Endothelial cell of umbilical vein (primary cell): ENCODE measurements at regions of chr20 and their contacts with region 1.

Region 1: GRCh38 chr20:4813863-4814695 is 92.4 kb downstream of the PRND start:
- DNase-seq: peak; percentile 58
- H3K4me3 ChIP-seq: no peak overlapping the region
- H3K27ac ChIP-seq: peak overlapping the region; percentile 21
- H3K4me1 ChIP-seq: peaks cover 28% of the 10 kb centered on the region
- H3K27me3 ChIP-seq: no peaks in the 10 kb centered on the region
- CTCF ChIP-seq: no peak
- POLR2A ChIP-seq: no peak

Region 2: GRCh38 chr20:4730780-4731179 is 83.3 kb before region 1 on chr20:
- CTCF ChIA-PET with region 1: no interaction called
- POLR2A ChIA-PET with region 1: no interaction called
- dilution Hi-C with region 1: no loop called
- intact Hi-C with region 1: no loop called
- DNase-seq: peak; percentile 63
- H3K4me3 ChIP-seq: no peak overlapping the region
- H3K27ac ChIP-seq: no peak overlapping the region
- H3K4me1 ChIP-seq: peaks cover 8% of the 10 kb centered on the region
- H3K27me3 ChIP-seq: peaks cover 16% of the 10 kb centered on the region in 2 experiments
- CTCF ChIP-seq: no peak
- POLR2A ChIP-seq: no peak

Region 3: GRCh38 chr20:4949833-4950178 is 135.7 kb after region 1 on chr20:
- CTCF ChIA-PET with region 1: interaction called, 3 read pairs
- POLR2A ChIA-PET with region 1: interaction called, 3 read pairs
- dilution Hi-C with region 1: no loop called
- intact Hi-C with region 1: loop called (anchors 2 kb)
- DNase-seq: peak; percentile 46
- H3K4me3 ChIP-seq: no peak overlapping the region
- H3K27ac ChIP-seq: no peak overlapping the region
- H3K4me1 ChIP-seq: peaks cover 12% of the 10 kb centered on the region
- H3K27me3 ChIP-seq: no peaks in the 10 kb centered on the region
- CTCF ChIP-seq: peak in 1 of 2 donors; percentile 41
- POLR2A ChIP-seq: no peak